ENCODE measurements at regions of chr12 and their contacts with region 1.

Region 1: GRCh38 chr12:101839324-101840283 is 8.8 kb upstream of the GNPTAB start:
- DNase-seq: peak; percentile 73
- H3K4me3 ChIP-seq: no peak overlapping the region
- H3K27ac ChIP-seq: no peak overlapping the region
- H3K4me1 ChIP-seq: no peaks in the 10 kb centered on the region
- H3K27me3 ChIP-seq: no peaks in the 10 kb centered on the region
- CTCF ChIP-seq: peak; percentile 71 to 84
- POLR2A ChIP-seq: no peak

Region 2: GRCh38 chr12:101287357-101287756 is 552.2 kb before region 1 on chr12:
- CTCF ChIA-PET with region 1: no interaction called
- POLR2A ChIA-PET with region 1: no interaction called
- dilution Hi-C with region 1: no loop called
- intact Hi-C with region 1: no loop called
- DNase-seq: no peak
- H3K4me3 ChIP-seq: no peak overlapping the region
- H3K27ac ChIP-seq: no peak overlapping the region
- H3K4me1 ChIP-seq: no peaks in the 10 kb centered on the region
- H3K27me3 ChIP-seq: no peaks in the 10 kb centered on the region
- CTCF ChIP-seq: no peak
- POLR2A ChIP-seq: no peak

Region 3: DNA sequence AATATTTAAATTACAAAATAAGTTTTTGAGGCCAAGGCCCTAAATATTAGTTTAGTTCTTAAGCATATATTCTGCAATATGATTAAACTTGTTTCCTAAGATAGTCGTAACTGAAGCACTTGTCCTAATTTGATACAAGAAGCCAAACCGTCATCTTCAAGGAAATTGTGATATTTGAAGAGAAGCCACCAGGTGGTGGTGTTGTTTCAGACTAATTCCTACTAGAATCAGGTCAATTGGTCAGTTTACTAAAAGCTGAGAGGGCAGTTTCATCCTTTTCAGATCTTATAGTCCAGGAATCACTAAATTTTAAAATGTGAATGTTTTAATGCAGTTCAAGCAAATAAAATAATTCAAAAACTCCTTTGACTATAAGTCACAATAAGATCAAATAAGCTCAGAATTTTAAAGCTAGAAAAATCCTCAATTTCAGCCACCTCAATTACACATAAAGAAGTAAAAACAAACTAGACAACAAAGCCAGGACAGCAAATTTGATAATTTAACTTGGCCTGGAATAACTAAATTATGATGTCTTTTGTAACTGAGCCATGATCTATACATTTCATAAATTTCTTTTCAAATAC is 425.0 kb before region 1 on chr12:
- CTCF ChIA-PET with region 1: interaction called, 22 read pairs
- POLR2A ChIA-PET with region 1: no interaction called
- dilution Hi-C with region 1: no loop called
- intact Hi-C with region 1: loop called (anchors 1 kb)
- DNase-seq: peak; percentile 76
- H3K4me3 ChIP-seq: no peak overlapping the region
- H3K27ac ChIP-seq: no peak overlapping the region
- H3K4me1 ChIP-seq: no peaks in the 10 kb centered on the region
- H3K27me3 ChIP-seq: peaks cover 0 to 4% of the 10 kb centered on the region in 2 experiments
- CTCF ChIP-seq: peak; percentile 30 to 39
- POLR2A ChIP-seq: no peak

Region 4: DNA sequence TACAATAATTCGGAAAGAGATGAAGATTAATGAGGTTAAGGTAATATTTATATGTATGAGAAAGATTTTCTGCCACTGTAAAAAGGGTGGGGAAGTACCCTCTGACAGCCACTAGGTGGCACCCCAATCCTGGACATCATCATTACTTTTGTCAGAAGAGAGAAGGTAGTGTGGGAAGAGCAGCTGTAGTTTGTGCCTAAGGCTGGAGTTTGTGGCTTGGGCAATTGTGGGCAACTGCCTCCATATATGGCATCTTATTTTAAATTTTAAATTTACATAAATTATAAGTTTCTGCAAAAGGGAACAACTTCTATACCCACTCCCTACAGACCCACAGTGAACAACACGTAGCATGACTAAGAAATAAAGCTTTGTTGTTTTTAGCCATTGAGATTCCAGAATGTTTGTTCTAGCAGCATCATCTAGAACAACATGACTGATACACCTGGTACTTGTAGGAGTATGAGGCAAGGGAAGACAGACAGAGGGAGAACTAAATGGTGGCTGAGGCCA is 65.9 kb before region 1 on chr12:
- CTCF ChIA-PET with region 1: interaction called, 149 read pairs
- POLR2A ChIA-PET with region 1: no interaction called
- dilution Hi-C with region 1: no loop called
- intact Hi-C with region 1: loop called (anchors 1 kb)
- DNase-seq: peak; percentile 71
- H3K4me3 ChIP-seq: no peak overlapping the region
- H3K27ac ChIP-seq: no peak overlapping the region
- H3K4me1 ChIP-seq: no peaks in the 10 kb centered on the region
- H3K27me3 ChIP-seq: no peaks in the 10 kb centered on the region
- CTCF ChIP-seq: peak; percentile 73 to 84
- POLR2A ChIP-seq: no peak

Region 5: DNA sequence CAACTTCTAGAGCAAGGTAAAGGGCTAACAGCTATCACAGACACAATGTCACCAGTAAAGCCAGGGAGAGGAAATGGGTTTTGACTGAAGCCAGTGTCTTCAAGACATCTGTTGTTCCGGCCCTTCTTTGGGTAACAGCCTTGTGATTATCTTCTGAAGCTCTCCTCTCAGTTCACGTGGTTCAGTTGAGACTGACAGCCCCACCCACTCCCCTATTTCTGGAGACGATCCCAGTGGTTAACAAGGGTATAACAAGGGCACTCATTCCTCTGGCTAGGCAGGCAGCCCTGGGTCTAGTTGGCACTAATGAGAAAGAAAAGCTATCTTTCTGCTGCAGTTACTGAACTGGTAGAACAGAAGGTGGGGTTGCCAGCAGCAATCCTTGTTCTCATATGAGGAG is 15.7 kb before region 1 on chr12:
- CTCF ChIA-PET with region 1: interaction called, 75 read pairs
- POLR2A ChIA-PET with region 1: no interaction called
- dilution Hi-C with region 1: no loop called
- intact Hi-C with region 1: no loop called
- DNase-seq: peak; percentile 18
- H3K4me3 ChIP-seq: no peak overlapping the region
- H3K27ac ChIP-seq: no peak overlapping the region
- H3K4me1 ChIP-seq: peaks cover 5% of the 10 kb centered on the region
- H3K27me3 ChIP-seq: no peaks in the 10 kb centered on the region
- CTCF ChIP-seq: peak; percentile 10 to 13
- POLR2A ChIP-seq: no peak

Region 6: GRCh38 chr12:101876861-101877815 is 37.5 kb after region 1 on chr12 and contains the start of gene DRAM1:
- CTCF ChIA-PET with region 1: interaction called, 36 read pairs
- POLR2A ChIA-PET with region 1: interaction called, 3 read pairs
- dilution Hi-C with region 1: no loop called
- intact Hi-C with region 1: loop called (anchors 1 kb)
- DNase-seq: peak; percentile 88
- H3K4me3 ChIP-seq: peak within 1 kb of the TSS; percentile 5 to 76 (median 55)
- H3K27ac ChIP-seq: peak within 1 kb of the TSS; percentile 93
- H3K4me1 ChIP-seq: peaks cover 26% of the 10 kb centered on the region
- H3K27me3 ChIP-seq: no peaks in the 10 kb centered on the region
- CTCF ChIP-seq: peak in 1 of 2 donors; percentile 19
- POLR2A ChIP-seq: peak; percentile 92
- total RNA-seq, gene DRAM1: 42.4 and 46.3 TPM in 2 replicates

Measured in endothelial cell of umbilical vein (primary cell).